Posterior vena cava (tissue), 2 donors: ENCODE measurements at regions of chr1 and their contacts with region 1.

Region 1: GRCh38 chr1:3423245-3423829 is 31.1 kb upstream of the ARHGEF16 start:
- DNase-seq: no peak

Region 2: DNA sequence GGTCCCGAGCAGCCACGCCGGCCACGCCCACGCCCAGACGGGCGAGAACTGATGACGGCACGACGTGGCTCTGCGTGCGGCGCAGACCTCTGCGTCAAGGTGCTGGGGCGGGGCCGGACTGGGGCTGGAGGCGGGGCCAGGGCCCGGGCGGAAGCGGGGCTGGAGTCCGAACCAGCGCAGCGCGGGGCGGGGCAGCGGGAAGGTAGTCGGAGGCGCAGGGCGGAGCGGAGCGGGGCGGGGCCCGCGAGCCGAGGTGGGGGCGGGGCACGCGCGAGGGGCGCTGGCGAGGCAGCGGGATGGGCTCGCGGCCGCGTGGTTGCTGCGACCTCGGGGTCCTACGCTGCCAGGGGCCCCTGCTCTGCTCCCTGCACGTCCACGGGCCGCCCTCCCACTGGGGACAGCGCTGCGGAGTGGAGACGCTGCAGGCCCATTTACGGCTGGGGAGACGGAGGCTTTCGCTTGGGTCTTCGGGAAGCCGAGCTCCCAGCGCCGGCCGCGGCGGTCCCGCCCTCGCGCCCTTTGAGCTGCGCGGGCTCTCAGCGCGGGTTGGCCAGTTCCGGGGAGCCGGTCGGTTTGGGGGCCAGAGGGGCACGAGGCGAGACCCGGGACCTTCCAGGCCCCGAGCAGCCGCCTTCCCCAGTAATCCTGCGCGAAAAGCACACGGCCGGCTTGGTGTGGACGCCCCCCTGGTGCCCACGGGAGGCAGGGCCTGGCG is 1010.7 kb before region 1 on chr1 and contains the start of gene PEX10:
- intact Hi-C with region 1: loop called in 1 of 2 experiments (anchors 10 kb)
- DNase-seq: peak; percentile 99
- total RNA-seq, gene PEX10: 10.9 to 13.1 TPM

Region 3: GRCh38 chr1:2821966-2822620 is 601.2 kb before region 1 on chr1:
- intact Hi-C with region 1: loop called in 1 of 2 experiments (anchors 10 kb)
- DNase-seq: no peak

Region 4: GRCh38 chr1:2875707-2876561 is 547.4 kb before region 1 on chr1:
- intact Hi-C with region 1: loop called (anchors 10 kb)
- DNase-seq: no peak

Region 5: GRCh38 chr1:3012456-3013291 is 410.7 kb before region 1 on chr1:
- intact Hi-C with region 1: loop called in 1 of 2 experiments (anchors 2 kb)
- DNase-seq: peak; percentile 85